ENCODE measurements at regions of chr14 and their contacts with region 1.

Region 1: GRCh38 chr14:78598041-78598920 is 428.1 kb downstream of the NRXN3 start:
- DNase-seq: peak; percentile 51 to 63
- H3K4me3 ChIP-seq: no peak overlapping the region
- H3K4me3 Mint-ChIP-seq: no peak overlapping the region
- H3K27ac Mint-ChIP-seq: no peak overlapping the region
- H3K4me1 ChIP-seq: no peaks in the 10 kb centered on the region
- H3K4me1 Mint-ChIP-seq: no peaks in the 10 kb centered on the region
- H3K27me3 ChIP-seq: no peaks in the 10 kb centered on the region
- H3K27me3 Mint-ChIP-seq: peaks cover 13% of the 10 kb centered on the region
- CTCF ChIP-seq: peak; percentile 78 to 93

Region 2: GRCh38 chr14:78164238-78164853 is 433.9 kb before region 1 on chr14:
- CTCF ChIA-PET with region 1: no interaction called
- POLR2A ChIA-PET with region 1: no interaction called
- intact Hi-C with region 1: loop called (anchors 5 kb)
- DNase-seq: peak; percentile 52 to 59
- H3K4me3 ChIP-seq: no peak overlapping the region
- H3K4me3 Mint-ChIP-seq: no peak overlapping the region
- H3K27ac Mint-ChIP-seq: no peak overlapping the region
- H3K4me1 ChIP-seq: no peaks in the 10 kb centered on the region
- H3K4me1 Mint-ChIP-seq: no peaks in the 10 kb centered on the region
- H3K27me3 ChIP-seq: no peaks in the 10 kb centered on the region
- H3K27me3 Mint-ChIP-seq: peaks cover 20% of the 10 kb centered on the region
- CTCF ChIP-seq: peak; percentile 57 to 77

Region 3: GRCh38 chr14:78836777-78837176 is 238.5 kb after region 1 on chr14:
- CTCF ChIA-PET with region 1: no interaction called
- POLR2A ChIA-PET with region 1: no interaction called
- intact Hi-C with region 1: loop called (anchors 10 kb)
- DNase-seq: peak; percentile 69
- H3K4me3 ChIP-seq: no peak overlapping the region
- H3K4me3 Mint-ChIP-seq: no peak overlapping the region
- H3K27ac Mint-ChIP-seq: no peak overlapping the region
- H3K4me1 ChIP-seq: no peaks in the 10 kb centered on the region
- H3K4me1 Mint-ChIP-seq: no peaks in the 10 kb centered on the region
- H3K27me3 ChIP-seq: no peaks in the 10 kb centered on the region
- H3K27me3 Mint-ChIP-seq: peaks cover 17% of the 10 kb centered on the region
- CTCF ChIP-seq: peak; percentile 57